Gastrocnemius medialis (tissue), 4 donors: ENCODE measurements at regions of chr11 and their contacts with region 1.

Region 1: GRCh38 chr11:125295931-125296330 is 131.4 kb downstream of the PKNOX2 start:
- DNase-seq: no peak
- ATAC-seq: no peak
- H3K4me3 ChIP-seq: no peak overlapping the region
- H3K27ac ChIP-seq: no peak overlapping the region
- H3K4me1 ChIP-seq: peaks cover 19 to 22% of the 10 kb centered on the region in 2 donors
- H3K27me3 ChIP-seq: no peaks in the 10 kb centered on the region
- CTCF ChIP-seq: no peak
- POLR2A ChIP-seq: no peak

Region 2: GRCh38 chr11:125180413-125181305 is 115.3 kb before region 1 on chr11:
- in situ Hi-C with region 1: no loop called
- intact Hi-C with region 1: no loop called
- DNase-seq: no peak
- ATAC-seq: no peak
- H3K4me3 ChIP-seq: no peak overlapping the region
- H3K27ac ChIP-seq: no peak overlapping the region
- H3K4me1 ChIP-seq: peaks cover 15 to 23% of the 10 kb centered on the region in 2 donors
- H3K27me3 ChIP-seq: no peaks in the 10 kb centered on the region
- CTCF ChIP-seq: no peak
- POLR2A ChIP-seq: no peak

Region 3: GRCh38 chr11:125192183-125192582 is 103.7 kb before region 1 on chr11:
- in situ Hi-C with region 1: no loop called
- intact Hi-C with region 1: no loop called
- DNase-seq: no peak
- ATAC-seq: no peak
- H3K4me3 ChIP-seq: no peak overlapping the region
- H3K27ac ChIP-seq: no peak overlapping the region
- H3K4me1 ChIP-seq: peaks cover 0 to 2% of the 10 kb centered on the region in 2 donors
- H3K27me3 ChIP-seq: no peaks in the 10 kb centered on the region
- CTCF ChIP-seq: no peak
- POLR2A ChIP-seq: no peak

Region 4: DNA sequence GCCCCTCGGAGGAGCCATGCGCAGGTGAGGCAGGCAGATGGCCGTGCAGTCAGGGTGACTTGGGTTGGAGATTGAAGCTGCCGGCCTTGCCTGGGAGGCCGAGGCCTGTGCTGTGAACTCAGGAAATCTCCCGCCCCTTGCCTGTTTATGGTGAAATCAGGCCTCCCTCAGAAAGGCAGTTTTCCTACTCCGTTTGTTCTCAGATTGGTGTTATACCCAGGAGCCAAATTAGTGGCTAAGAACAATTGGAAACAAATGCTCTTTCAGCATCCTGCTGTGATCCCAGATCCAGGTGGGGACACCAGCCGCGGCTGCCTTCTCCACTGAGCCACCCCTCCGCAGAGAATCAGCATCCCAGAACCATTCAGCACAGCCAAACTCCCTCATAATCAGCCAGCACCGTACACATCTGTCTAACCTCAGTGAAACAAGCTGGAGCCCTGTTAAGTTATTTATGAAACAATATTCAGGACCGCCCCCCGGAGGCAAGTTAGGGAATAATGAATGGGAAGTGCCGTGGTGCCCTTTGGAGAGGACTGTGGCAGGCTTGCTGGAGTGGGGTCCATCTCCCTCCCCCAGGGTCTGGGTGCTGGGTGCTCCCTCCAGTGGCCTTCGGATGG is 71.4 kb before region 1 on chr11:
- in situ Hi-C with region 1: no loop called
- intact Hi-C with region 1: loop called (anchors 2 kb)
- DNase-seq: no peak
- ATAC-seq: no peak
- H3K4me3 ChIP-seq: no peak overlapping the region
- H3K27ac ChIP-seq: peak overlapping the region; percentile 56 to 75 (median 70)
- H3K4me1 ChIP-seq: peaks cover 40 to 46% of the 10 kb centered on the region in 2 donors
- H3K27me3 ChIP-seq: no peaks in the 10 kb centered on the region
- CTCF ChIP-seq: peak in 2 of 5 experiments; percentile 11 to 16
- POLR2A ChIP-seq: no peak

Region 5: DNA sequence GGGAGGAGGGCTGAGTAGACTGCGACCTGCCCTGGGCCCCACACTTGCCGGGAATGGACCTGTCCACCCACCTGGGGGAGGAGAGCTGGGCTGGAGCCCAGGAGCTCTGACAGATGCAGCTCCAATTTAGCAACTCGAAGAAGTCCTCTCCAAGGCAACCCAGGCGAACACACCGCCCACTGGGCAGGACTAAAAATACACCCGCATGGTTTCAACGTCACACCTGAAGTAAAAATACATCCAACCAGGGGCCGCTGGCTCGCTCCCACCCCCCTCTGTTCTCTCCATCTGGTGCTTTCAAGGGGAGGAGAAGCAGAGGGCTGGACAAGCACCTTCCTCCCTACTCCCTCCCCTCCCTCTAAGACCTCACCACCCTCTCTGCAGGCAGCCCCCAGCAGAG is 80.2 kb after region 1 on chr11:
- in situ Hi-C with region 1: no loop called
- intact Hi-C with region 1: no loop called
- DNase-seq: peak; percentile 89 to 96
- ATAC-seq: peak; percentile 83 to 84
- H3K4me3 ChIP-seq: peak overlapping the region in 1 of 4 donors; percentile 3
- H3K27ac ChIP-seq: peak overlapping the region; percentile 78 to 93 (median 90)
- H3K4me1 ChIP-seq: peaks cover 53 to 57% of the 10 kb centered on the region in 2 donors
- H3K27me3 ChIP-seq: no peaks in the 10 kb centered on the region
- CTCF ChIP-seq: no peak
- POLR2A ChIP-seq: peak in 1 of 2 donors; percentile 77